ENCODE measurements at regions of chr7 and their contacts with region 1.

Region 1: DNA sequence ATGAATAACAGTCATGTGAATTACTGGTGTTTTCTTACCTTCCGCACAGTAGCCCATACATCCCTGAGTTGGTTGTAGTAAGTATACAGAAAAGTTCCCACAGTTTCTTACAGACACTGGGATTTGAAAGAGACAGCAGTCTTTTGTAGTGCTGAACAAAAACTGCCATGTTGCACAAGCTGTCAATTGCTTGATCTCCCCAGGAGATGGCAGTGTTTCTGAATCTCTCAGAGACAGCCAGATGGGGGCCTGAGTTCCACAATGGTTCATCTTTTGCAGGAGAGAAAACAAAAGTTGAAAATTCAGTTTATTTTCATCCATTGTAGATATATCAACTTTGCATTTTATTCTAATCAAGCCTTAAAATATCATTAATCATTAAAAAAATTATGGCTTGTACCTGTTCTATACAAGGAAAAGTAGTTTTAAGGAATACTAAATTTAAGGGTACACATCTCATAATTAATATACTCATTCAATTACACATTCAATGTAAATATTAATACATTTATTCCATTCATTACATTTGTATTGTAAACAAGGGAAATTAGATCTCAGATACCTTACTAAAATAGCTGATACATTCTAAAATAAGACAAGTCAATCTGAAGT is 14.5 kb downstream of the VWDE start:
- DNase-seq: peak; percentile 73
- H3K4me3 Mint-ChIP-seq: no peak overlapping the region
- H3K27ac Mint-ChIP-seq: no peak overlapping the region
- H3K4me1 Mint-ChIP-seq: peaks cover 18% of the 10 kb centered on the region
- H3K27me3 Mint-ChIP-seq: no peaks in the 10 kb centered on the region
- CTCF ChIP-seq: peak; percentile 82

Region 2: GRCh38 chr7:10855583-10855982 is 1533.6 kb before region 1 on chr7:
- CTCF ChIA-PET with region 1: no interaction called
- intact Hi-C with region 1: loop called (anchors 5 kb)
- DNase-seq: no peak
- H3K4me3 Mint-ChIP-seq: no peak overlapping the region
- H3K27ac Mint-ChIP-seq: no peak overlapping the region
- H3K4me1 Mint-ChIP-seq: peaks cover 8% of the 10 kb centered on the region
- H3K27me3 Mint-ChIP-seq: no peaks in the 10 kb centered on the region
- CTCF ChIP-seq: no peak

Region 3: GRCh38 chr7:11689096-11689495 is 700.1 kb before region 1 on chr7:
- CTCF ChIA-PET with region 1: no interaction called
- intact Hi-C with region 1: no loop called
- DNase-seq: no peak
- H3K4me3 Mint-ChIP-seq: no peak overlapping the region
- H3K27ac Mint-ChIP-seq: no peak overlapping the region
- H3K4me1 Mint-ChIP-seq: no peaks in the 10 kb centered on the region
- H3K27me3 Mint-ChIP-seq: no peaks in the 10 kb centered on the region
- CTCF ChIP-seq: no peak

Region 4: GRCh38 chr7:11956991-11957390 is 432.2 kb before region 1 on chr7:
- CTCF ChIA-PET with region 1: no interaction called
- intact Hi-C with region 1: no loop called
- DNase-seq: no peak
- H3K4me3 Mint-ChIP-seq: no peak overlapping the region
- H3K27ac Mint-ChIP-seq: no peak overlapping the region
- H3K4me1 Mint-ChIP-seq: no peaks in the 10 kb centered on the region
- H3K27me3 Mint-ChIP-seq: no peaks in the 10 kb centered on the region
- CTCF ChIP-seq: no peak

Region 5: GRCh38 chr7:12434009-12434642 is 44.9 kb after region 1 on chr7:
- CTCF ChIA-PET with region 1: no interaction called
- intact Hi-C with region 1: loop called (anchors 5 kb)
- DNase-seq: no peak
- H3K4me3 Mint-ChIP-seq: no peak overlapping the region
- H3K27ac Mint-ChIP-seq: no peak overlapping the region
- H3K4me1 Mint-ChIP-seq: no peaks in the 10 kb centered on the region
- H3K27me3 Mint-ChIP-seq: no peaks in the 10 kb centered on the region
- CTCF ChIP-seq: peak; percentile 61